ENCODE measurements at regions of chr21 and their contacts with region 1.

Region 1: GRCh38 chr21:39867198-39867650 is at the start of gene PCP4:
- DNase-seq: peak; percentile 71
- H3K4me3 ChIP-seq: peak within 1 kb of the TSS in 1 of 2 experiments; percentile 52; a peak in 1 of 4 replicates
- H3K27ac ChIP-seq: no peak within 1 kb of the TSS
- H3K4me1 ChIP-seq: no peaks in the 10 kb centered on the region; a peak in 1 of 4 replicates
- H3K27me3 ChIP-seq: no peaks in the 10 kb centered on the region
- CTCF ChIP-seq: peak; percentile 53
- EP300 ChIP-seq: no peak
- RAD21 ChIP-seq: peak; percentile 79
- polyA plus RNA-seq, gene PCP4: not detected in 2 replicates

Region 2: DNA sequence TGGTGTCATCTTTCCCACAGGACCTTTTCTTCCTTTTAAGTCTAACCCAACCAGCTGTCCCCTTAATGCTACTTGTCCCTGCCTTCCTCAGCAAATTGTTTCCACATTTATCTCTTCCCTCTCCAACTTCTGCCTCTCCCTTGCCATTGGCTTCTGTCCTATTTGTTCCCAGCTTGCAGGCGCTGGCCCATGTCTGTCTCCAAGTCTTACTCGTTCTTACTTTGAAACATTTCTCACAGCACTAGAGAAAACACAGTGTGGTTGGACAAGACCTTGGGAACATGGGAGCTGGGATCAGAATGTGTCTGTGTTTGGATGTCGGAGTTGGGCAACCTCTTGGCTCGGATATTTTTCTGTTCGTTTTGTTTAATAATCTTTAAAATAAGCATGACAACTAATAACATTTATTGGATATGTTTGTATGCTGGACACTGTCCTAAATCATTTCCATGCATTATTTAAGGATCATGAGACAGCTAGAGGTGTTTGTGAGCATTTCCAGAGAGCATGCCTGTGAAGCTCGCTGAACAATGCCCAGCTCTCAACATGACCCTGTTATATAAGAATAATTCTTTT is 548.0 kb before region 1 on chr21:
- CTCF ChIA-PET with region 1: no interaction called
- POLR2A ChIA-PET with region 1: no interaction called
- DNase-seq: no peak
- H3K4me3 ChIP-seq: no peak overlapping the region
- H3K27ac ChIP-seq: no peak overlapping the region
- H3K4me1 ChIP-seq: peaks cover 0 to 8% of the 10 kb centered on the region in 2 experiments; a peak in 1 of 4 replicates
- H3K27me3 ChIP-seq: no peaks in the 10 kb centered on the region
- CTCF ChIP-seq: no peak
- EP300 ChIP-seq: no peak
- RAD21 ChIP-seq: no peak

Region 3: DNA sequence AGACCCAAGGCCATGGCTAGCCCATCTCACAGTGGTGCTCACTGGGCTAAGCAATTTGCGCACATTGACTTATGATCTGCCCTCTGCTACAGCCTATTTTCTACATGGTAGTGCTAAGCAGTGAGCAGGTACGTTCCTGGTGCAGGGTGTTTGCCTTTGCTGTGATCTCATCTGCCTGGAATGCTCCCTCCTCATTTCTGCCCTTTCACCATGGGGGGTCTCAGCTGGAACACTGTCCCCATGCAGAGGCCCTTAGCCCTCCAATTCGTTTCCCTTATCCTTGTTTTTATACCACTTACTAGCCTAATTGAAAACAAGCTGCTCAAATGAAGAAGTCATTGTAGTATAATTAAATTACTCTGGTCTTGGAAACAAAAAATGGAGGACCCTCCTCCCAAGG is 256.5 kb before region 1 on chr21:
- CTCF ChIA-PET with region 1: no interaction called
- POLR2A ChIA-PET with region 1: no interaction called
- DNase-seq: no peak
- H3K4me3 ChIP-seq: no peak overlapping the region
- H3K27ac ChIP-seq: no peak overlapping the region
- H3K4me1 ChIP-seq: peaks cover 0 to 8% of the 10 kb centered on the region in 2 experiments; a peak in 1 of 4 replicates
- H3K27me3 ChIP-seq: no peaks in the 10 kb centered on the region
- CTCF ChIP-seq: no peak
- EP300 ChIP-seq: no peak
- RAD21 ChIP-seq: no peak

Region 4: DNA sequence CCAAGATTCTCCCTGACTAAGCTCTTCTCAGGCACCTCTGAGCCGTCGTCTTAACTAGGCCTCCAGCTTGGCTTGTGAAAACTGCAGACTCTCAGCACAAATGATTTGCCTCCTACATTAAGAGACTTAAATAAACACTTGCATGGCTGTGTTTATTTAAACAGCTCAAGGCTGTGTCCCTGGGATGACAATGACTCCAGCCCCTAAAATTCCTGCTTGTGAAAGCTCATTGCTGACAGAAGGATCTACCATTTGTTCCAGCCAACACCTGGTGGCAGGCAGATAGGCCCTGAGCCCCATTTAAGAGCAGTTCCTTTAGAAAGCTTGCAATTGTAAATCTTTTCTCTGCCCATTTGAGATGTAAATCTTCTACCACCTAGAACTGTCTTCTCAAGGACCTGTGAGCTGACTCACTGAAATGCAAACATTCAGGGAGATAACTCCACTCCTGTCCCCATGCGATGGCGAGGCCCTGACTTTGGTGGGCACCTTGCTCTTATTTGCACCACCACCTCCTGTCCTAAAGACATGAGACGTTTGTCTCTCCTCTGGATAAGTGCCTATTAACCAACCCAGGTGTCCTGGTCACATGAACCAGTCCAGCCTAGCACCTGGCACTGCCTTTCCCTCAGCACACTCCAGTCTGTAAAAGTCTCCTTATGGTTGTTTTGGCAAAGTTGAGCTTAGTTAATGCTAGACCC is 15.1 kb before region 1 on chr21:
- CTCF ChIA-PET with region 1: interaction called, 40 read pairs
- POLR2A ChIA-PET with region 1: no interaction called
- DNase-seq: no peak
- H3K4me3 ChIP-seq: no peak overlapping the region
- H3K27ac ChIP-seq: no peak overlapping the region
- H3K4me1 ChIP-seq: no peaks in the 10 kb centered on the region
- H3K27me3 ChIP-seq: no peaks in the 10 kb centered on the region
- CTCF ChIP-seq: no peak
- EP300 ChIP-seq: no peak
- RAD21 ChIP-seq: no peak

Region 5: DNA sequence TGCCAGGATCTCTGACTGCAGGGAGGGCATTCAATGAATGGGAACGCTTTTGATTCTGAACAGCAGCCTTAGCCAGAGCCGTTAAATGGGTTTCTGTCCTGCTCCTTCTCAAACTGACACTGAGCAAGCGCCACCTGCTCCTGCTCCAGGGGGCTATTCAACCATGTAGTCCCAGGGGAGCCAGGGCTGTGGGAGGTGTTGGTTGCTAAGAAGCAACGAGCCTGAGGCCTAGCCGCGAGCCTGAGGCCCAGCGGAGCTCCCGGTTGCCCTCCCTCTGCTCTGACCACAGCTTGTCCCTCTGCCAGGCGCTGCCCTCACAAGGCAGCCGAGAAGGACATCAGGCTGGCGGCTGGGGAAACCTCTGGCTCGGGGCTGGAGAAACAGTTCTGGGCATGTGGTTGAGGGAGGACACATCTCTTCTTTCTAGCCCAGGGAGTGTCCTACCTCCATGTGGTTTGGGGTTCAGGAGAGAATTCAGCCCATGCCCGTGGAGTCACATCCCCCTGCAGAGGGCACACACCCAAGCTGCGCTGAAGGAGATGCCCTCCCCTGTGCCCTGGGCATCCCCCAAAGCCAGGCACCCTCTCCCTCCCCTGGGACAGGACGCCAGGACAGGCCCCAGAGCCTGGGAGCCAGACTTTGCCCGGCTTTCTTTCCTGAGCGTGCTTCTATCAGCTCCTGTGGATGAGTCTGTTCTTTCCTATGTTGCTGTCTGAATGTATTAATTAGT is 18.1 kb after region 1 on chr21:
- CTCF ChIA-PET with region 1: interaction called, 42 read pairs
- POLR2A ChIA-PET with region 1: no interaction called
- DNase-seq: peak; percentile 8
- H3K4me3 ChIP-seq: no peak overlapping the region
- H3K27ac ChIP-seq: no peak overlapping the region
- H3K4me1 ChIP-seq: no peaks in the 10 kb centered on the region; a peak in 1 of 4 replicates
- H3K27me3 ChIP-seq: no peaks in the 10 kb centered on the region
- CTCF ChIP-seq: no peak
- EP300 ChIP-seq: no peak
- RAD21 ChIP-seq: no peak

Region 6: GRCh38 chr21:40120940-40121575 is 253.8 kb after region 1 on chr21:
- CTCF ChIA-PET with region 1: interaction called, 83 read pairs
- POLR2A ChIA-PET with region 1: no interaction called
- DNase-seq: peak; percentile 40
- H3K4me3 ChIP-seq: peak overlapping the region in 1 of 2 experiments; percentile 53; a peak in 1 of 4 replicates
- H3K27ac ChIP-seq: no peak overlapping the region
- H3K4me1 ChIP-seq: no peaks in the 10 kb centered on the region
- H3K27me3 ChIP-seq: no peaks in the 10 kb centered on the region
- CTCF ChIP-seq: peak; percentile 47
- EP300 ChIP-seq: no peak
- RAD21 ChIP-seq: peak; percentile 87

Region 7: GRCh38 chr21:40126065-40126464 is 258.8 kb after region 1 on chr21:
- CTCF ChIA-PET with region 1: interaction called, 83 read pairs
- POLR2A ChIA-PET with region 1: no interaction called
- DNase-seq: no peak
- H3K4me3 ChIP-seq: no peak overlapping the region
- H3K27ac ChIP-seq: no peak overlapping the region
- H3K4me1 ChIP-seq: no peaks in the 10 kb centered on the region
- H3K27me3 ChIP-seq: no peaks in the 10 kb centered on the region
- CTCF ChIP-seq: no peak
- EP300 ChIP-seq: no peak
- RAD21 ChIP-seq: no peak

Measured in SK-N-SH (cell line).